ENCODE measurements at regions of chr17 and their contacts with region 1.

Region 1: GRCh38 chr17:21214015-21214776 is at the start of gene TMEM11:
- DNase-seq: peak; percentile 96
- H3K4me3 ChIP-seq: peak within 1 kb of the TSS; percentile 78 to 97 (median 94)
- H3K27ac ChIP-seq: peak within 1 kb of the TSS; percentile 90 to 96 (median 95)
- H3K4me1 ChIP-seq: peaks cover 36 to 62% (median 52%) of the 10 kb centered on the region in 4 donors
- H3K27me3 ChIP-seq: no peaks in the 10 kb centered on the region
- CTCF ChIP-seq: peak in 3 of 5 experiments; percentile 10 to 34 (median 15)
- EP300 ChIP-seq: no peak
- POLR2A ChIP-seq: peak; percentile 87
- total RNA-seq, gene TMEM11: 15.1 to 35.0 (median 24.5) TPM

Region 2: GRCh38 chr17:21119247-21119918 is 94.8 kb before region 1 on chr17:
- in situ Hi-C with region 1: loop called in 1 of 4 experiments (anchors 25 kb)
- intact Hi-C with region 1: no loop called
- DNase-seq: peak; percentile 74
- H3K4me3 ChIP-seq: peak overlapping the region in 1 of 4 donors; percentile 16
- H3K27ac ChIP-seq: peak overlapping the region in 2 of 4 donors; percentile 30 to 58
- H3K4me1 ChIP-seq: peaks cover 0 to 10% (median 3%) of the 10 kb centered on the region in 4 donors
- H3K27me3 ChIP-seq: no peaks in the 10 kb centered on the region
- CTCF ChIP-seq: peak; percentile 74 to 83 (median 79)
- EP300 ChIP-seq: no peak
- POLR2A ChIP-seq: no peak

Region 3: DNA sequence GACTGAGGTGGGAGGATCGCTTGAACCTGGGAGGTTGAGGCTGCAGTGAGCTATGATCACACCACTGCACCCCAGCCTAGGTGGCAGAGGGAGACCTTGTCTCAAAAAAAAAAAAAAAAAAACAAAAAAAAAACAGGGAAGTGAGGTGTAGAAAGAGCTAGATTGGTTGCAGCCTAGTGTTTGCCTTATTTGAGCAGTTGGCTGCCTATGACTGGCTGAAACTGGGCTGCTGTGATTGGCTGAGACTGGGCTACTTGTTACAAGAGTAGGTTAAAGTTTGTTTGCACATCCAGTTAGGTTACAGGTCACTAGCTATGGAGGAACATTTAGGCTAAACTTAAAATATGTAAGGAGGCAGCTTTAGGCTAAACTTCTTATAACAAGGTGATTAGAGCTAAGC is 81.8 kb before region 1 on chr17:
- in situ Hi-C with region 1: loop called in 1 of 4 experiments (anchors 10 kb)
- intact Hi-C with region 1: no loop called
- DNase-seq: no peak
- H3K4me3 ChIP-seq: no peak overlapping the region
- H3K27ac ChIP-seq: no peak overlapping the region
- H3K4me1 ChIP-seq: peaks cover 0 to 15% (median 6%) of the 10 kb centered on the region in 4 donors
- H3K27me3 ChIP-seq: no peaks in the 10 kb centered on the region
- CTCF ChIP-seq: no peak
- EP300 ChIP-seq: no peak
- POLR2A ChIP-seq: no peak

Region 4: DNA sequence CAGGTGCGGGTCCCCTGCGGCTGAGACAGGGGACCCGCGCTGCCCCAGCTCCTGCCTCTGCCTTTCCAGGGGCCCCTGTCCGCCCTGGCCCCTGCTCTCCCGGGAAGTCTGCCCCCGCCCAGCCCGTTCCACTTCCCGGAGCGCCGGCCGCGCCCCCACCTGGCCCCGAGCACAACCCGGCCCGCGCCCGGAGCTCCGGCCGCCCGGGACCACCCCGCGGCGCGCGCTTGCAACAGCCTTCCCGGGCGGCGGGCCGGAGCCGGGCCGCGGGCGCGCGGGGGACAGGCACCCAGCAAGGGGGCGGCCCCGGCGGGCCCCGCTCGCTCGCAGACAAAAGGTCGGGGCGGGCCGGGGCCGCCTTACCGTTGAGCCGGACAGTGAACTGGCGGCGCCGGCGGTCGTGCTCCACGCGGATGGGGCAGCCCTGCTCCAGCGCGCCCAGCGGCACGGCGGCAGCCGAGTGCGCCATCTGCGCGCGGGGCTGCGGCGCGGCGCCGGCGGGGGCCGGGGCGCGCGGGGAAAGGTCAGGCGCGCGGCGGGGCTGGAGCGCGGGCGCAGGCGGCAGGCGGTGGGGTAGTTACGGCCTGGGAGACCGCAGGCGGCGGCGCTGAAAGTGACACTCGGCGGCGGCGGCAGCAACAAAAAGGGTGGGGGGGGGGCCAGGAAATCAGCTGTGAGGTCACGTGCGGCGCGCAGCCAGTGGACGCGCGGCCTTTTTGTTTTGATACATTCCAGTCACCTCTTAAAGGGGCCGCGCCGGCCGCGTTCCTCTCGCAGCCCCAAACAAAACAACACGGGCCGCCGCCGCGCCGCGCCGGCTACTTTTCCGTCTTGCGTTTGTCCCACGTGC is 38.8 kb after region 1 on chr17 and contains the start of gene NATD1:
- in situ Hi-C with region 1: no loop called
- intact Hi-C with region 1: loop called (anchors 2 kb)
- DNase-seq: peak; percentile 88
- H3K4me3 ChIP-seq: peak within 1 kb of the TSS; percentile 59 to 91 (median 70)
- H3K27ac ChIP-seq: peak within 1 kb of the TSS; percentile 60 to 72 (median 64)
- H3K4me1 ChIP-seq: peaks cover 4 to 22% (median 18%) of the 10 kb centered on the region in 4 donors
- H3K27me3 ChIP-seq: no peaks in the 10 kb centered on the region
- CTCF ChIP-seq: no peak
- EP300 ChIP-seq: no peak
- POLR2A ChIP-seq: peak; percentile 20
- total RNA-seq, gene NATD1: 1.4 to 7.9 (median 5.0) TPM

Region 5: DNA sequence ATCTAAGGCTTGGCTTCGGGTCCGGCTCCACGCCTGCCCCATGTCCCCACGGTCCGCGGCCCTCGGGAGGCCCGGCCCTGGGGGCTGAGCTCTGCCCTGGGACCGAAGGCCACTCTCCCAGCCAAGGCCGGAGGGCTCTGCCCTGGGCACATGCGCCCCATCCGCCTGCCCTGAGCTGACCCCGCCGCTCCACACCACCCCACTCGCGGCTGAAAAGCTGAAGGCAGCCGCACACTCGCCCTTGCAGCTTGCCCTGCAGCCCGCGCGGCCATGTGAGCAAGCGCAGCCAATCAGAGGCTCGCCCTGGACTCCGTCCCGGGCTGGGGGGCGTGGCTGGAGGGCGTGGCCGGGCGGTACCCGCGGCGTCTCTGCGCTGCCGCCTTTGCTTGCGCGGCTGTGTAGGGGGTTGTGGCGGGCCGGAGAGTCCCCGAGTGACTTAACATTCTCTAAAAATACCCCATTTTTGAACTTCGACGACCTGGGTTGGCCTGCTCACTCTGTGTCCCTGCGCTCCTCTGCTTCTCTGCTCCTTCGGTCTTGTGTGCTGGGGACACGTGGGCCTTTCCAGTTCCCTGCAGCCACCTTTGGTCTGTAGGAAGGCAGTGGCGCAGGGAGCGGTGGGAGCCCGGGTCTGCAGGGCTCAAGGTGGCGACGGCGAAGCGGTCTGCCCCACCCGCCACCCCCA is 61.5 kb after region 1 on chr17:
- in situ Hi-C with region 1: loop called in 2 of 4 experiments (anchors 10 kb)
- intact Hi-C with region 1: no loop called
- DNase-seq: peak; percentile 97
- H3K4me3 ChIP-seq: peak overlapping the region; percentile 45 to 62 (median 59)
- H3K27ac ChIP-seq: peak overlapping the region; percentile 63 to 85 (median 81)
- H3K4me1 ChIP-seq: peaks cover 6 to 24% (median 15%) of the 10 kb centered on the region in 4 donors
- H3K27me3 ChIP-seq: no peaks in the 10 kb centered on the region
- CTCF ChIP-seq: peak in 2 of 5 experiments; percentile 6 to 8
- EP300 ChIP-seq: no peak
- POLR2A ChIP-seq: peak; percentile 64

Measured in transverse colon (tissue), 4 donors.